Right ventricle myocardium superior (tissue), 1 donor: ENCODE measurements at regions of chr7 and their contacts with region 1.

Region 1: DNA sequence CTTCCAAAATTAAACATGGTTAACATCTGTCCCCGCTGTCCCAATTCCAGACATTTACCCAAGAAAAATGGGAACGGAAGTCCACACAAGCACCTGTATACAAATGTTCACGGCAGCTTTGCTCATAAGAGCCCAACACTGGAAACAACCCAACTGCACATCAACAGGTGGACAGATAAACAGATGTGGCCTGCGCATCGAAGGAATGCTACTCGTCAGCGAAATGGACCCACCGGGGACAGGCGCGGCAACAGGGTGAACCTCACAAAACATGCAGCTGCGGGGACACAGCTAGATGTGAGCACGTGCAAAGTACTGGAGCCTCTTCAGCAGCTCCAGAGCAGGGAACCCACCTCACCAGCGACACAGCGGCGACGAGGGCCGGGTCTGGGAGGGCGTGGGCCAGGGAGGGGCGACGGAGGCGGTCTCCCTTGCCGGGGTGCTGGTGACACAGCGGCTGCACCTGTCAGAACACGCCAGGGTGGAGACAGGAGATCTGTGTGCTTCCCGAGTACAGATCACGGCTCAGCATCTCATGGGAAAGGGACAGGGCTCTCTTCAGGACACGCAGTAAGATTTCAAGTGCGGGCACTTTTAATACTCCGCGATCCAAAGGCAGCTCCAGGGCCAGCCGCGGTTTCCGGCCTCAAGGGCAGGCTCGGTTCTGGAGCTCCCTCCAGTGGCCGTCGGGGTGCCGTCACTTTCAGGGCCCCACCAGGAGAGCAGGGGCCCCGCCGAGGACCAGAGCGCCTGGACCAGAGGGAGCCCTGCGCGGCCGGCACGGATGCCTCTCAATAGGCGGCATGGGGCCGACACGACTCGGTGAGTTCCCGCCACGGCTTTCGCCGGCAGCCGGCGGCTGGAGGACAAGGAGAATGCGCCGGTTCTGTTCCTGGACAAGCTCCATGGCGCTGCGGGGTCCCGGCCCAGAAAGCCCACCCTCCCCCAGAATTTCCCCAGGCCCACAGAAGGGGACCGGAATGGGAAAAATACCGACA is 21.2 kb downstream of the GPR146 start:
- DNase-seq: peak; percentile 93
- ATAC-seq: peak; percentile 98

Region 2: DNA sequence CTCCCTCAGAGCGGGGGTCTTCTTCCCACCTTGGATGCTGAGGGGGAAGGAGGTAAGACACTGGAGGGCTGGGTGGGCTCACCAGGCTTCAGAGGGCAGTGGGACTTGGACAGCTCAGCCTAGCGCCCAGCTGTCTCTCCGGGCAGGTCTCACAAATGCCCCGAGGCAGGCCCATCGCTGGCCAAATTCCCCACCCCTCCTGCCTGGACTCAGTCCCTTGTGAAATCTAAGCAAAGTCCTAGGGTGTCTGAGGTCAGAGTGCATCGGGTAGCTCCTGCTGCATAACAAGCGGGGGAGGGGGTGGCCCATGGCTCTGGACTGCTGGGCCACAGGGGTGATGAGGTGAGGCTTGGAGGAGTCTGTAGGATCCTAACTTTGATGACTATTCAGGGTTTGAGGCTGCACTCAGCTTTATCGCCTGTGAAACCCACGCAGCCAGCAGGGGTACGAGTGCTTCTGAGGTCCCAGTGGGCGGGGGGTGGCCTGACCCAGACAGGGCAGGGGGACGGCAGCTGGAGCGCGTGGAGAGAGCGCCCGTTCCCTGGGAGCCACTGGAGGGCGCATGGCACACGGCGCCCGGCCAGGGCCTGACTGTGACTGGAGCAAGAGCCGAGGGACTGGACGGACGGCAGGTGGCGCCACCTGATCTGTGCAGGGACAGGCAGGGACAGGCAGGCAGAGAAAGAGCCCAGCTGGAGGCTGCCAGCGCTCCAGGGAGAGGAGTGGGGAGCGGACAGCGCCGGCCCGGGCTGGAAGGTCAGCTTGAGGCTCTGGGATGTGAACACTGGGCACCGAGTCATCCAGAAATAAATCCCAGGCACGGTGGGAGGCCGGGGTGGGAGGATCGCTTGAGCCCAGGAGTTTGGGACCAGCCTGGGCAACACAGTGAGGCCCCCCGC is 72.6 kb before region 1 on chr7:
- intact Hi-C with region 1: loop called (anchors 1 kb)
- DNase-seq: peak; percentile 98
- ATAC-seq: peak; percentile 98

Region 3: GRCh38 chr7:1247527-1248059 is 182.0 kb after region 1 on chr7:
- intact Hi-C with region 1: no loop called
- DNase-seq: no peak
- ATAC-seq: no peak